Endothelial cell of umbilical vein (primary cell): ENCODE measurements at regions of chr11 and their contacts with region 1.

Region 1: DNA sequence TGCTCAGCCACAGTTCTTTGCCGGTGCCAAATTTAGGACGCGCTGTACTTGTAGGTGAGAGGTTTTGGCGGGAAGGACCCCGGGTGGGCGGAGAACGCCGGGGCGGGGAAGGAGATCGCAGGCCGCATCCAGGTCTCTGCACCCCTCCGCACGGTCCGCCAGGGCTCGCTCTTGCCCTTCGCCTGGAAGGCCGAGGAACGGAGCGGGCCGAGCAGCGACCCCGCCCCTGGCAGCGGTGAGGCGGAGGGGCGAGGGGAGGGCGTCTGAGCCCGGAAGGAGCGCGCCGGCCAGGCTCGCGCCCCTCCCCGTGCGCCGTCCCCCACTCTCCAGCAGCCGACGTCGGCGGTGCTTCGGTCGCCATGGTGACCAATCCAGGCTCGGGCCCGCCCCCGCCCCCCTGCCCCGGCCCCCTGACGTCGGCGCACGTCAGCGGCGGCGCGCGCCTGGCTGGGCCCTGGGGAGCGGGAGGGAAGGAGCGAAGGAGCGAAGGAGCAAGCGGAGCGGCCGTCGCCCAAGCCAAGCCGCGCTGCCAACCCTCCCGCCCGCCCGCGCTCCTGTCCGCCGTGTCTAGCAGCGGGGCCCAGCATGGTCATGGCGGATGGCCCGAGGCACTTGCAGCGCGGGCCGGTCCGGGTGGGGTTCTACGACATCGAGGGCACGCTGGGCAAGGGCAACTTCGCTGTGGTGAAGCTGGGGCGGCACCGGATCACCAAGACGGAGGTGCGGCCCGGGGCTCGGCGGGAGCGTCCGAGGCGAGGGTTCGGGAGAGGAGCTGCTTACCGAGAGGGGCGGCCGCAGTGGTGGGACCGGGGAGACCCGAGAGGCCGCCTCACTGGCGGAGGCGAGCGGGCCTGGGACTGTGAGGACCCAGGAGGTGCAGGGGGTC is at the start of gene SIK2:
- DNase-seq: peak; percentile 95
- H3K4me3 ChIP-seq: peak within 1 kb of the TSS; percentile 66 to 80 (median 67)
- H3K27ac ChIP-seq: peak within 1 kb of the TSS; percentile 92
- H3K4me1 ChIP-seq: peaks cover 17% of the 10 kb centered on the region
- H3K27me3 ChIP-seq: no peaks in the 10 kb centered on the region
- CTCF ChIP-seq: peak; percentile 88 to 100
- POLR2A ChIP-seq: no peak
- total RNA-seq, gene SIK2: 11.7 and 14.6 TPM in 2 replicates

Region 2: DNA sequence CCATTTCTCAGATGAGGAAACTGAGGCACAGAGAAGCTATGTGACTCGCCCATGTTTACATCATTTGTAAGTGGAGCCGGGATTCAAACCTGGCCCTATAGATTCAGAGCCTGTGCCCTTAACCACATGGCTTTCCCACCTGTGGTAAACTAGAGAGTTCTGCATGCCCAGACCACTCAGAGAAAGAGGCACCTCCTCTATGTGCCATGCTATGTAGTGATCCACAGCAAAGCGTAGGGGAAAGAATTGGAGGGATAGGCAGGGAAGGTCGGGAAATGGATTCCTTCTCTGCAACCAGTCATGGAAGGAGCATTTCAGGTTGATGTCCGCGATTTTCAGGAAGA is 372.1 kb before region 1 on chr11:
- CTCF ChIA-PET with region 1: no interaction called
- POLR2A ChIA-PET with region 1: no interaction called
- dilution Hi-C with region 1: no loop called
- intact Hi-C with region 1: no loop called
- DNase-seq: no peak
- H3K4me3 ChIP-seq: no peak overlapping the region
- H3K27ac ChIP-seq: no peak overlapping the region
- H3K4me1 ChIP-seq: no peaks in the 10 kb centered on the region
- H3K27me3 ChIP-seq: peaks cover 1 to 3% of the 10 kb centered on the region in 2 experiments
- CTCF ChIP-seq: no peak
- POLR2A ChIP-seq: no peak

Region 3: DNA sequence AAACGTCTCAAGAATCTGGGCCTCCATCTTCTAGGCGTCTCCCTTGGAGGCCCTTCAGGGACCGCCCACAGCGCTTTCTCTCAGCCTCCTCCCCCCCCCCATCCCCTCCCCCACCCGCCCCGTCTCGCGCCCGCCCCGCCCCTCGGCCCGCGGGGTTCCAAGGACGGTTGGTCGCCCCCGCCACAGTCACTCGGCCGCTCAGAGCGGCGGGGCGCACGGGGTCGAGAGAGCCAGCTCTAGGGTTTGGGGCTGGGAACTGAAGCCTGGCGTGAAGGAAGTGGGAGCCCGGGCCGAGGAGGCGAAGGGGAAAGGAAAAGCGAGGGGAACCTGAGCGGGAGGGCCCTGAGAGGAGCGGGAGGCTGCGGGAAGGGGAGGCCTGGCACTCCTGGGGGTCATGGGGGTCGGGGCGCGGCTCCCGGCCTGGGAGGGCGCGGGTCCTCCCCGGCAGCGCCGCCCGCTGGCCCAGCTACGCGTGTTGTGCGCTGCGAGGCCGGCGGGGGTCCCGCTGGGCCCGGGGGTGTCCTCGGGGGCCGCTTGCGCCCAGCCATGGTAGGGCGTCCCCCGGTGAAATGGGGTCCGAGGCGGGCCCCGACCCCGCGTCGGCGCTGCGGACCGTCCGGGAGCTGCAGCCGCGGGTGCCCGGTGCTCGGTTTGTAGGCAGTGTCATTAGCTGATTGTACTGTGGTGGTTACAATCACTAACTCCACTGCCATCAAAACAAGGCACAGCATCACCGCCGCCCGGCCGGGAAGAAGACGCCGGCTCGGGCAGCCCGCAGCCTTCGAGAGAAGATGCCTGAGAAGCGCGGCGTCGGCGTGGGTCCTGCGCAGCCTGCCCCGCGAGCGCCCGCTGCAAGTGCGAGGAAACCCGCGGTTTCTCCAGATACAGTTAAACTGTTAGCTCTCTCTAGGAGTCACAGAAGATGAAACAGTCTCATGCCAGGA is 89.7 kb before region 1 on chr11 and contains the start of gene BTG4:
- CTCF ChIA-PET with region 1: no interaction called
- POLR2A ChIA-PET with region 1: no interaction called
- dilution Hi-C with region 1: no loop called
- intact Hi-C with region 1: no loop called
- DNase-seq: no peak
- H3K4me3 ChIP-seq: peak within 1 kb of the TSS in 1 of 3 experiments; percentile 25
- H3K27ac ChIP-seq: no peak within 1 kb of the TSS
- H3K4me1 ChIP-seq: peaks cover 4% of the 10 kb centered on the region
- H3K27me3 ChIP-seq: peaks cover 23 to 44% of the 10 kb centered on the region in 2 experiments
- CTCF ChIP-seq: peak in 1 of 2 donors; percentile 5
- POLR2A ChIP-seq: no peak
- total RNA-seq, gene BTG4: not detected in 2 replicates

Region 4: GRCh38 chr11:111565114-111565720 is 37.0 kb before region 1 on chr11:
- CTCF ChIA-PET with region 1: interaction called, 4 read pairs
- POLR2A ChIA-PET with region 1: interaction called, 3 read pairs
- dilution Hi-C with region 1: no loop called
- intact Hi-C with region 1: loop called (anchors 1 kb)
- DNase-seq: peak; percentile 77
- H3K4me3 ChIP-seq: no peak overlapping the region
- H3K27ac ChIP-seq: no peak overlapping the region
- H3K4me1 ChIP-seq: no peaks in the 10 kb centered on the region
- H3K27me3 ChIP-seq: no peaks in the 10 kb centered on the region
- CTCF ChIP-seq: peak; percentile 62 to 74
- POLR2A ChIP-seq: no peak

Region 5: DNA sequence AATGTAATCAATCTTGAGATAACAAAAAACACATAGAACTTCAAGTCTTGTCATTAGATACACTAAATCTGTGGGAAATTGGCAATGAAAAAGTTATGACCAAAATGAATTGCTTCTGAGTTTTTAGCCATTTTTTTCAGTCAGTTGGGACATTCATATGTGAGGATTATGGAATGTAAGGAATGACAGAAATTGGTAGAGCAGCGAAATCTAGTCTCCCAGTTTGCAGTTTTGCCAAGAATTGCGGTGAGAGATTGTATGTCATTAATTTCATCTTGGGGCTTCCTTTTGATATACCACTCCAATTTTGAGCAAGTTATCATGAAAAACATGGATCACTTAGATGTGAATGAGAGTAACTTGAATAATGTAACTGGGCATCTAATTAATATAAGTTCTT is 50.0 kb after region 1 on chr11:
- CTCF ChIA-PET with region 1: interaction called, 12 read pairs
- POLR2A ChIA-PET with region 1: no interaction called
- dilution Hi-C with region 1: no loop called
- intact Hi-C with region 1: no loop called
- DNase-seq: no peak
- H3K4me3 ChIP-seq: no peak overlapping the region
- H3K27ac ChIP-seq: no peak overlapping the region
- H3K4me1 ChIP-seq: no peaks in the 10 kb centered on the region
- H3K27me3 ChIP-seq: no peaks in the 10 kb centered on the region
- CTCF ChIP-seq: no peak
- POLR2A ChIP-seq: no peak

Region 6: DNA sequence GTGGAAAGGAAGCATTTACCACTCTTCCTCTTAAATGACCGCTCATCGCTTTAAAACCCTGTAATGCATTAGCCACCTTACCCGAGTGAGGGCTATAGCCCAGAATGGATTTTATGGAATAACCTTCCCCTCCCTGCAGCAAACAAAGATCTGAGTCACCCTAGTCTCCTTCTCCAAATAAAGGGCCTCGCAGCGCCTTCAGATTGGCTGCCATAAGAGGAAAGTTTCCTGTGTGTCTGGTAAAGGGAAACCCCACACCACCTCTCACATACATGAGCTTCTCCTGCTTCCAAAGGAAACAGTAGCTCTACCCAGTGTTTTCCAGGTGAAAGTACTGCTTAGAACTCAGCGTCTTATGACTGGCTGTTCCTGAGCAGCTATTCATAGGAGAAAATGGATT is 116.2 kb after region 1 on chr11:
- CTCF ChIA-PET with region 1: interaction called, 11 read pairs
- POLR2A ChIA-PET with region 1: no interaction called
- dilution Hi-C with region 1: no loop called
- intact Hi-C with region 1: no loop called
- DNase-seq: peak; percentile 87
- H3K4me3 ChIP-seq: no peak overlapping the region
- H3K27ac ChIP-seq: peak overlapping the region; percentile 35
- H3K4me1 ChIP-seq: peaks cover 6% of the 10 kb centered on the region
- H3K27me3 ChIP-seq: no peaks in the 10 kb centered on the region
- CTCF ChIP-seq: no peak
- POLR2A ChIP-seq: no peak

Region 7: DNA sequence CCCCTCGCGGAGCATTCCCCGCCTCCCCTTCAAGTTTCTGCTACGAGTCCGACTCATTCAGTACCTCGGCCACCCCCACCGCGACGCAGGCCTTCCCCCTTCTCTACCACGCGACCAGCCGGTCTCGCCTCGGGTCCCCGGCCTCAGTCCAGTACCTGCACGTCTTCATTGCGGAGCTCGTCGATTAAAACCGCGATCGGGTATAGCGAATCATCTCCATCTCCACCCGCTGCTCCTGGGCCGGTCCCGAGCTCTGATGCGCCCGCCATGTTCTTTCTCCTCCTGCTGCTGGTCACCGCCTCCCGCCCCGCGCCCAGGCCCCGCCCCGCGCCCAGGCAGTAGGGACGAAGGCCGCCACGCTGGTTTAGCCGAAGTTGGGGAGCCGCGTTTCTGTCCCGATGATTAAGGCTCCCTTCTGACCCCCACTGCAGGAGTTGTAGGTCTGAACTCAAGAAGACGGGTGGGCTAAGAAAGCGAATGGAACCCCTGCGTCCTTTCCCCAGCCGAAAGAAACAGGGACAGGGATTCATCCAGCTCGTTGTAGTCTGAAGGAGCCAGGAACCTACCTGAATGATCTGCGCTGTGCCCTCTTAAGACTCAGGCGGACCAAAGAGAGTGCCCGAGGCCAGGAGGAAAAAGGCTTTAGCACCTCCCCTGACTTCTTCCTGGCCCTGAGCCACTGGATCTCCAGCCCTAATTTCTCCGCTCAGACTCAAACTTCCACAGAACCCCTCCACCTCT is 164.0 kb after region 1 on chr11 and contains the start of gene PPP2R1B:
- CTCF ChIA-PET with region 1: interaction called, 42 read pairs
- POLR2A ChIA-PET with region 1: no interaction called
- dilution Hi-C with region 1: no loop called
- intact Hi-C with region 1: loop called (anchors 1 kb)
- DNase-seq: peak; percentile 83
- H3K4me3 ChIP-seq: peak within 1 kb of the TSS; percentile 68 to 85 (median 73)
- H3K27ac ChIP-seq: peak within 1 kb of the TSS; percentile 51
- H3K4me1 ChIP-seq: peaks cover 15% of the 10 kb centered on the region
- H3K27me3 ChIP-seq: no peaks in the 10 kb centered on the region
- CTCF ChIP-seq: no peak
- POLR2A ChIP-seq: peak; percentile 16
- total RNA-seq, gene PPP2R1B: 42.7 and 50.8 TPM in 2 replicates

Region 8: DNA sequence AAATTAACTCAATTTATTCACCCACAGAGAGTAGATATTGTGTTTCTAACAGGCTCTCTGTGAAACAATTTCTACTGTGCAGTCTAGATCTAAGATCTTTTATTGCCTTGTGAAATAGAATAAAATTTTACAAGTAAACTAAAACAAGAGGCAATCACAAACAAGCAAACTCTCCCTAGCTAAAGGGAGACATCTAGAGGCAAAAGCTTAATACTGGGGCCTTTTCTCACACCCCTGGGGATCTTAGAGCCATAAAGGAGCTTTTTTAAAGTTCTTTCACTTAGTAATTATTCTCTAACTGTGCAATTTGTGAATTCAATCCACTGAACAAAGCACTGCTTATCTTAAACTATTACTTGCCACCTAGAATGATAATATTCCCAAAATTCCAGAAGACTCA is 249.4 kb after region 1 on chr11:
- CTCF ChIA-PET with region 1: interaction called, 10 read pairs
- POLR2A ChIA-PET with region 1: no interaction called
- dilution Hi-C with region 1: no loop called
- intact Hi-C with region 1: no loop called
- DNase-seq: peak; percentile 18
- H3K4me3 ChIP-seq: no peak overlapping the region
- H3K27ac ChIP-seq: no peak overlapping the region
- H3K4me1 ChIP-seq: peaks cover 2% of the 10 kb centered on the region
- H3K27me3 ChIP-seq: no peaks in the 10 kb centered on the region
- CTCF ChIP-seq: peak in 1 of 2 donors; percentile 23
- POLR2A ChIP-seq: no peak

Region 9: DNA sequence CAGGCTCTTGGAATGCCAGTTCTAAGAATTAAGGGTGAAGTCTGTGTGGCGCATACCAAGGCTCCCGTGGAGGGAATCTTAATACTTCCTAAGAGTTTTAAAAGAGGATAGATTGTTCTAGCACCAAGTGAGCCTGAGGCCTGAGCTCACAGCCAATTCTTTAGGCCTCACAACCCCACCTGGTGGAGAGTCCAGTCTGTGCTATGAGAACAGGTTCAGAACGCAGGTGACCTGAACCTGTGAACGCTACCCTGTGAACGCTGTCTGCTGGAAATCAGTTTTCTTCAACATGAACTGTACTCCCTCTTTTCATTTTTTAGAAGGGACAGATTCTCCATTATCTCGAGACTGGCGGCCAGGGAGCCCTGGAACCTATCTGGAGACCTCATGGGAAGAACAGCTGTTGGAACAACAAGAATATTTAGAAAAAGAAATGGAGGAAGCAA is 379.8 kb after region 1 on chr11:
- CTCF ChIA-PET with region 1: no interaction called
- POLR2A ChIA-PET with region 1: no interaction called
- dilution Hi-C with region 1: no loop called
- intact Hi-C with region 1: loop called (anchors 5 kb)
- DNase-seq: peak; percentile 59
- H3K4me3 ChIP-seq: no peak overlapping the region
- H3K27ac ChIP-seq: no peak overlapping the region
- H3K4me1 ChIP-seq: peaks cover 16% of the 10 kb centered on the region
- H3K27me3 ChIP-seq: no peaks in the 10 kb centered on the region
- CTCF ChIP-seq: peak; percentile 55 to 73
- POLR2A ChIP-seq: no peak